ENCODE measurements at regions of chr6 and their contacts with region 1.

Region 1: GRCh38 chr6:35688581-35689322 is at the start of gene FKBP5:
- DNase-seq: peak; percentile 93 to 98 (median 95)
- H3K4me3 ChIP-seq: peak within 1 kb of the TSS; percentile 90 to 100 (median 93)
- H3K27ac ChIP-seq: peak within 1 kb of the TSS; percentile 39 to 83
- H3K4me1 ChIP-seq: peaks cover 0 to 9% (median 0%) of the 10 kb centered on the region in 3 donors
- H3K27me3 ChIP-seq: no peaks in the 10 kb centered on the region
- CTCF ChIP-seq: no peak
- total RNA-seq, gene FKBP5: 267 TPM

Region 2: DNA sequence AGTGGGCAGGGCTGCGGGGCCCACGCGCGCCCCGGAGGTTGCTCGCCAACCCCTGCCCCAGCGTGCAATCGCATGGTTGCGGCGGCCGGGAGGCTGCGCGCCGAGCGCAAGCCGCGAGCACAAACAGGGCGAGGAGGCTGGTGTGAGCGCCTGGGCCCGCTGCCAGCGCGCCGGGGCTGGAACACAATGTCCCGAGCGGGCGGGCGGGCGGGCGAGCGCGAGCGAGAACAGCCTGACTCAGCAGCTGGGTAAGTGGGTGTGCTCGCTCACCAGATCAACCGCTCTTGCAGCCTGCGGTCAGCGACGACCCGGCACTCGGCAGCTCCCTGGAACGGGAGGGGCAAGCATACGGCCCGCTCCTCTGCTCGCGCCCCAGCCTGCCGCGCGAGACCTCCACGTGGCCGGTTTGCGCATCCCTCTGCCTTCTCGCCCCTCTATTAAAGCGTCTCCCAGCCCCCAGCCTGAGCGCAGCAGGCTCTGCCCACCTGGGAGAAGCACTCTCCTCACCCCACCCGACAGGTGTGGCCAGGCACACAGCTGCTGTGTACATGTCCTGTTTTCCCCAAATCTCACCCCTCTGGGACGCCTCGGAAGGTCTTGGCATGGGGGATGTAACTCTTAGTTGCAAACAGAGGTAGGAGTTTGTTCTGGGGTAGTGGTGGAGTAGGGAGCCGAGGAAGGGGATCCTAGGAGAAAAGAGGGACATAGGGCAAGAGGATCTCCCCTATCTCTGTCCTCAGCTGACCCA is 39.4 kb after region 1 on chr6:
- intact Hi-C with region 1: loop called (anchors 5 kb)
- DNase-seq: peak; percentile 82 to 99 (median 91)
- H3K4me3 ChIP-seq: peak overlapping the region; percentile 52 to 66 (median 57)
- H3K27ac ChIP-seq: peak overlapping the region; percentile 97 to 99
- H3K4me1 ChIP-seq: peaks cover 0 to 57% (median 51%) of the 10 kb centered on the region in 3 donors
- H3K27me3 ChIP-seq: no peaks in the 10 kb centered on the region
- CTCF ChIP-seq: no peak

Measured in kidney (tissue), 22 donors.